Activated CD4-positive, alpha-beta memory T cell treated with anti-CD3 and anti-CD28 coated beads for 36 hours (primary cell): ENCODE measurements at regions of chr12 and their contacts with region 1.

Region 1: GRCh38 chr12:123905319-123905925 is 67.2 kb downstream of the CCDC92 start:
- DNase-seq: peak; percentile 79
- H3K4me3 Mint-ChIP-seq: no peak overlapping the region
- H3K27ac Mint-ChIP-seq: peak overlapping the region; percentile 15
- H3K4me1 Mint-ChIP-seq: peaks cover 10% of the 10 kb centered on the region
- H3K27me3 Mint-ChIP-seq: peaks cover 7% of the 10 kb centered on the region

Region 2: GRCh38 chr12:123938679-123939480 is 33.5 kb after region 1 on chr12:
- CTCF ChIA-PET with region 1: interaction called, 21 read pairs
- POLR2A ChIA-PET with region 1: no interaction called
- intact Hi-C with region 1: loop called (anchors 2 kb)
- DNase-seq: peak; percentile 38
- H3K4me3 Mint-ChIP-seq: peak overlapping the region; percentile 66
- H3K27ac Mint-ChIP-seq: peak overlapping the region; percentile 80
- H3K4me1 Mint-ChIP-seq: peaks cover 20% of the 10 kb centered on the region
- H3K27me3 Mint-ChIP-seq: no peaks in the 10 kb centered on the region

Region 3: DNA sequence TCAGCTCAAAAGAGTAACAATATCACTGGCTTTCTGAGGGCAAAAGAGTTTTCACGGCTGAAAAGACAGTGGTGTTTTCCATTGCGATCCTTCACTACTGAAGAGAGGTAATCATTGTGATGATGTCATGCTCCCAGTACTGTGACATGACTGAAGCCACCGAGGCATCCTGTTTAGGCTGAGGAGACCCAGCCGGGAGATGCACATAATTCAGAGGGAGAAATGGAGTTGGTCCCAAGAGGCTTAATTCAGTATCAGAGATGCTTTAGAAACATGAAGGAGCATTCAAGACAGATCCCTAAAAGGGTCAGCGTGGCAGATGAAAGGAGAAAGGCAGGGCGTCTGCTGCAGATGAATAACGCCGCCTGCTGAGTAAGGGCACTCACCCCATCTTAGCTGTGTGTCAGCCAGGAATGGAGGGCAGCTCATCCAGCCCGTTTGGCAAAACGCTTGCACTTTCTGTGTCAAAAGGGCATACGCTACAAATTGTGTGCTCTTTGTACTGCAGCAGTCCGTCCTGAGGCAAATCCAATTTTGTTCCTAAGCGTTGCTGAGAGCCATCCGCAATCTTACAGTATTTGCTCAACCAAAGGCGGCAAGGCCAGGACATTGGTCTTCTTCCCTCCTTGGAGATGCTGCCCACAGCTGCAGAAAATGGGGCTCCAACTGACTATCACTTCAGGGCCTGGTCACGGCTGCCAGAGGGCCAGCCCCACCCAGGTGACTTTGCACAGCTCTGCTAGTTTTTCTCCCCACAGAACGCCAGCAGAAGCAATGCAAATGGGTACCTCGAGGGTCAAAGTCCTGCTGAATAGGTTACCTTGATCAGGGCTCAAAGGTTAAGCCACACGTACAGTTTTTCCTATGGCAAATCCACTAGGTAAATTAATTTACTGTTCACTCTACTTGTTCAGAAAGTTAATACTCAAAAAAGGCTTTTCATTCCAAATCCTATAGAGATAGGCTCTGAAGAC is 43.7 kb after region 1 on chr12:
- CTCF ChIA-PET with region 1: no interaction called
- POLR2A ChIA-PET with region 1: no interaction called
- intact Hi-C with region 1: no loop called
- DNase-seq: no peak
- H3K4me3 Mint-ChIP-seq: no peak overlapping the region
- H3K27ac Mint-ChIP-seq: no peak overlapping the region
- H3K4me1 Mint-ChIP-seq: no peaks in the 10 kb centered on the region
- H3K27me3 Mint-ChIP-seq: no peaks in the 10 kb centered on the region

Region 4: GRCh38 chr12:123972457-123973401 is 67.3 kb after region 1 on chr12 and contains the starts of genes CCDC92 and ZNF664:
- CTCF ChIA-PET with region 1: interaction called, 8 read pairs
- POLR2A ChIA-PET with region 1: no interaction called
- intact Hi-C with region 1: loop called (anchors 2 kb)
- DNase-seq: peak; percentile 97
- H3K4me3 Mint-ChIP-seq: peak within 1 kb of the TSS; percentile 93
- H3K27ac Mint-ChIP-seq: peak within 1 kb of the TSS; percentile 73
- H3K4me1 Mint-ChIP-seq: peaks cover 44% of the 10 kb centered on the region
- H3K27me3 Mint-ChIP-seq: no peaks in the 10 kb centered on the region
- total RNA-seq, gene CCDC92: 11.4 to 11.7 TPM
- total RNA-seq, gene ZNF664: 53.2 to 56.9 TPM

Region 5: DNA sequence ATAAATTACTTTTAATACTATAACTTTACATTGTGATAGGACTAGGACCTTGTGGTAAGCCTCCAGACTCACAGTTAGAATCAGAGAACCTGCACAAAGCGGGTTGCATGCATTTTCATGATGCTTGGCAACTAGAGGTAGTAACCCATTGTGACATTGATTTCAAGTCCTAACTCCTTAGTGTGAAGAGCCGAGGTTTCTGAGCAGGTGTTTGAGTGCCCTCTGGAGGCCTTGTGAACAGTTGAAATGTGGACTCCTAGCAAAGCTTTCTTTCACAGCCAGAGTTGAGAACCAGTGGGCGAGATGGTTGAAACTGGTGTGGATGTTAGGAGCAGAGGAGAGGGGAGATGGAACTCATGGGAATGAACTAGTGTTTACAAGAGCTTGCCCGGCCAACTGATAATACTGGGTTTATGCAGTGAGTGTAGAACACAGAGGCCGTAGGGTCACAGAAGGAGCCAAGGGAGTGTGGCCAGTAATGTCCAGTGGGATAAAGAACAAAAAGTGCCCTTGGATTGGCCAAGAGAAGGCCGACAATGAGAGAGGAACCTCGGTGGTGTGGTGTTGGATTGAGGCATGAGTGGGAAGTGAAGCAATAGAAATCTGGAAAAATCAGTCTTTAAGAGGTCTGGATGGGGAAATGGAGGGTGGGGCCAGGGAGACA is 78.5 kb after region 1 on chr12:
- CTCF ChIA-PET with region 1: interaction called, 107 read pairs
- POLR2A ChIA-PET with region 1: interaction called, 4 read pairs
- intact Hi-C with region 1: loop called (anchors 1 kb)
- DNase-seq: peak; percentile 60
- H3K4me3 Mint-ChIP-seq: no peak overlapping the region
- H3K27ac Mint-ChIP-seq: no peak overlapping the region
- H3K4me1 Mint-ChIP-seq: peaks cover 15% of the 10 kb centered on the region
- H3K27me3 Mint-ChIP-seq: no peaks in the 10 kb centered on the region

Region 6: DNA sequence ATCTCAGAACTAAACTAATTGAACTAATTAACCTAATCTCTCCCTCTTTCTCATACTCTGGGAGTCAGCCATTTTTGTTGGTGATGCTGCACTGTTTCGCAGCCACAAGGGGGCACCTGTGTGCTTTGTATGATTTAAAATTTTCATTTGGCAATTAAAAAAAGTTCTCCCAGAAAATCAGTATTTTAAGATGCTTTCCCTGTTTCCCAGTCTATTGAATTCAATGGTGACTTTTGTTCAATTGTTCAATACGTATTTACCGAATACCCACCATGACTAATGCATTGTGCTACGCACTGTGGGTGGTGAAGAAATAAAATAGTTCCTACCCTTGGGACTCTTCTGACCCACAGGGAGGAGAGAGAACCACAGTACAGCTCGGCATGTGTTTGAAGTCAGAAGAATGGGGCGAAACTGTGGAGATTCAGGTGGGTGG is 131.3 kb after region 1 on chr12:
- CTCF ChIA-PET with region 1: interaction called, 22 read pairs
- POLR2A ChIA-PET with region 1: no interaction called
- intact Hi-C with region 1: loop called (anchors 2 kb)
- DNase-seq: peak; percentile 41
- H3K4me3 Mint-ChIP-seq: no peak overlapping the region
- H3K27ac Mint-ChIP-seq: no peak overlapping the region
- H3K4me1 Mint-ChIP-seq: no peaks in the 10 kb centered on the region
- H3K27me3 Mint-ChIP-seq: peaks cover 4% of the 10 kb centered on the region

Region 7: GRCh38 chr12:124227951-124228711 is 322.7 kb after region 1 on chr12:
- CTCF ChIA-PET with region 1: no interaction called
- POLR2A ChIA-PET with region 1: no interaction called
- intact Hi-C with region 1: no loop called
- DNase-seq: peak; percentile 10
- H3K4me3 Mint-ChIP-seq: no peak overlapping the region
- H3K27ac Mint-ChIP-seq: no peak overlapping the region
- H3K4me1 Mint-ChIP-seq: peaks cover 9% of the 10 kb centered on the region
- H3K27me3 Mint-ChIP-seq: peaks cover 18% of the 10 kb centered on the region

Region 8: GRCh38 chr12:124411281-124411878 is 506.0 kb after region 1 on chr12:
- CTCF ChIA-PET with region 1: no interaction called
- POLR2A ChIA-PET with region 1: no interaction called
- intact Hi-C with region 1: no loop called
- DNase-seq: no peak
- H3K4me3 Mint-ChIP-seq: no peak overlapping the region
- H3K27ac Mint-ChIP-seq: no peak overlapping the region
- H3K4me1 Mint-ChIP-seq: no peaks in the 10 kb centered on the region
- H3K27me3 Mint-ChIP-seq: no peaks in the 10 kb centered on the region

Region 9: GRCh38 chr12:124433147-124433874 is 527.9 kb after region 1 on chr12:
- CTCF ChIA-PET with region 1: no interaction called
- POLR2A ChIA-PET with region 1: no interaction called
- intact Hi-C with region 1: no loop called
- DNase-seq: no peak
- H3K4me3 Mint-ChIP-seq: no peak overlapping the region
- H3K27ac Mint-ChIP-seq: no peak overlapping the region
- H3K4me1 Mint-ChIP-seq: no peaks in the 10 kb centered on the region
- H3K27me3 Mint-ChIP-seq: no peaks in the 10 kb centered on the region